ENCODE measurements at regions of chr2 and their contacts with region 1.

Region 1: GRCh38 chr2:208265801-208266552 is at the start of gene PIKFYVE:
- DNase-seq: peak; percentile 88
- H3K4me3 Mint-ChIP-seq: peak within 1 kb of the TSS; percentile 89
- H3K27ac Mint-ChIP-seq: peak within 1 kb of the TSS; percentile 92
- H3K4me1 Mint-ChIP-seq: peaks cover 46% of the 10 kb centered on the region
- H3K27me3 Mint-ChIP-seq: no peaks in the 10 kb centered on the region
- total RNA-seq, gene PIKFYVE: 28.7 and 33.5 TPM in 2 replicates

Region 2: GRCh38 chr2:207769597-207770486 is 496.1 kb before region 1 on chr2 and contains the start of gene FZD5:
- intact Hi-C with region 1: loop called (anchors 5 kb)
- DNase-seq: peak; percentile 77
- H3K4me3 Mint-ChIP-seq: peak within 1 kb of the TSS; percentile 86
- H3K27ac Mint-ChIP-seq: peak within 1 kb of the TSS; percentile 31
- H3K4me1 Mint-ChIP-seq: peaks cover 25% of the 10 kb centered on the region
- H3K27me3 Mint-ChIP-seq: peaks cover 48% of the 10 kb centered on the region
- total RNA-seq, gene FZD5: 0.86 and 1.0 TPM in 2 replicates

Region 3: GRCh38 chr2:208254871-208255556 is 11.0 kb before region 1 on chr2 and contains the start of gene IDH1:
- intact Hi-C with region 1: loop called (anchors 1 kb)
- DNase-seq: peak; percentile 88
- H3K4me3 Mint-ChIP-seq: peak within 1 kb of the TSS; percentile 99
- H3K27ac Mint-ChIP-seq: peak within 1 kb of the TSS; percentile 89
- H3K4me1 Mint-ChIP-seq: peaks cover 21% of the 10 kb centered on the region
- H3K27me3 Mint-ChIP-seq: peaks cover 2% of the 10 kb centered on the region
- total RNA-seq, gene IDH1: 23.8 and 23.9 TPM in 2 replicates

Region 4: DNA sequence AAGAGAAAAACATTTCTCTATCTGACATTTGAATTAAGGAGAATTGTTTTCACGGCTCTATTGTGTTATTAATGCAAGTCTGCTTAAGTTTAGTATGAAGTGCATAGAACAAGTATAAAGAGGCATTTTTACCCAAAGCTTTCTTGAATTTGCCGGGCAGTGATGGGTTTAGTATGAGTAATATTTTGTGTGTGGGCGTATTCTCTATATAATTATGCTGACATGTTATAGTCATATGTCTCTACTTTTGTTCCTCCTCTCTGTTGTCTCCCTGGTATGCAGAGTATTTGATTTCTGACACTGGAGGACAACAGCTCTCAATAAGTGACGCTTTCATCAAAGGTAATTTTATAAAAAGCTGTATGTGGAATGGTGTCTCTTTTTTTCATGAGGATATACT is 46.0 kb after region 1 on chr2:
- intact Hi-C with region 1: loop called (anchors 1 kb)
- DNase-seq: no peak
- H3K4me3 Mint-ChIP-seq: no peak overlapping the region
- H3K27ac Mint-ChIP-seq: no peak overlapping the region
- H3K4me1 Mint-ChIP-seq: peaks cover 21% of the 10 kb centered on the region
- H3K27me3 Mint-ChIP-seq: no peaks in the 10 kb centered on the region

Region 5: GRCh38 chr2:208373460-208374089 is 107.6 kb after region 1 on chr2:
- intact Hi-C with region 1: no loop called
- DNase-seq: no peak
- H3K4me3 Mint-ChIP-seq: no peak overlapping the region
- H3K27ac Mint-ChIP-seq: no peak overlapping the region
- H3K4me1 Mint-ChIP-seq: no peaks in the 10 kb centered on the region
- H3K27me3 Mint-ChIP-seq: no peaks in the 10 kb centered on the region

Region 6: GRCh38 chr2:210002158-210003157 is 1736.5 kb after region 1 on chr2 and contains the start of gene RPE:
- intact Hi-C with region 1: loop called (anchors 5 kb)
- DNase-seq: peak; percentile 95
- H3K4me3 Mint-ChIP-seq: peak within 1 kb of the TSS; percentile 96
- H3K27ac Mint-ChIP-seq: peak within 1 kb of the TSS; percentile 93
- H3K4me1 Mint-ChIP-seq: peaks cover 60% of the 10 kb centered on the region
- H3K27me3 Mint-ChIP-seq: no peaks in the 10 kb centered on the region
- total RNA-seq, gene RPE: 56.8 and 58.7 TPM in 2 replicates